Aorta (tissue), 5 donors: ENCODE measurements at regions of chr10 and their contacts with region 1.

Region 1: GRCh38 chr10:28381903-28382347 is 79.1 kb upstream of the MPP7 start:
- DNase-seq: peak; percentile 86 to 88
- ATAC-seq: peak; percentile 94
- H3K4me3 ChIP-seq: no peak overlapping the region
- H3K27ac ChIP-seq: no peak overlapping the region
- H3K4me1 ChIP-seq: no peaks in the 10 kb centered on the region
- H3K27me3 ChIP-seq: no peaks in the 10 kb centered on the region

Region 2: GRCh38 chr10:27558612-27559020 is 823.3 kb before region 1 on chr10:
- intact Hi-C with region 1: loop called in 1 of 2 experiments (anchors 10 kb)
- DNase-seq: peak in 1 of 2 donors; percentile 55
- ATAC-seq: no peak
- H3K4me3 ChIP-seq: no peak overlapping the region
- H3K27ac ChIP-seq: no peak overlapping the region
- H3K4me1 ChIP-seq: no peaks in the 10 kb centered on the region
- H3K27me3 ChIP-seq: no peaks in the 10 kb centered on the region

Region 3: GRCh38 chr10:27742195-27743011 is 639.5 kb before region 1 on chr10:
- intact Hi-C with region 1: loop called in 1 of 2 experiments (anchors 10 kb)
- DNase-seq: peak; percentile 86 to 94
- ATAC-seq: peak; percentile 90
- H3K4me3 ChIP-seq: peak overlapping the region; percentile 78 to 81
- H3K27ac ChIP-seq: peak overlapping the region; percentile 87 to 94
- H3K4me1 ChIP-seq: no peaks in the 10 kb centered on the region
- H3K27me3 ChIP-seq: no peaks in the 10 kb centered on the region

Region 4: DNA sequence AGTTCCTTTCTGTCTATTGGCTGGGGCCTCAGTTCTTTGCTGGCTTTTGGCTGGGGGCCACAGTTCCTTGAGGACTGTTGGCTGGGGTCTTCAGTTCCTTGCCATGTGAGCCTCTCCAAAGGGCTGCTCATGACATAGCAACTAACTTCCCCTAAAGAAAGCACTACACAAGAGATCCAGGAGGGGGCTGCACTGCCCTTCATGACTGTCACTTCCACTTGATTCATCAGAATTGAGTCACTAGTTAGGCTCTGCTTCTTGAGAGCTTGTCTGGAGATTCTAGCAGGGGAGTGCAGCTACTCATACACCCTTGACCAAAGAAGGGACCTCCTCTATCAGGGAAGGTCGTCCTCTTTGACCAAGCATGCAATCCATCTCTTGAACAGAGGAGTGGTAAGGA is 598.3 kb before region 1 on chr10:
- intact Hi-C with region 1: loop called in 1 of 2 experiments (anchors 10 kb)
- DNase-seq: no peak
- ATAC-seq: peak; percentile 15
- H3K4me3 ChIP-seq: no peak overlapping the region
- H3K27ac ChIP-seq: no peak overlapping the region
- H3K4me1 ChIP-seq: peaks cover 3% of the 10 kb centered on the region in 2 donors
- H3K27me3 ChIP-seq: no peaks in the 10 kb centered on the region

Region 5: DNA sequence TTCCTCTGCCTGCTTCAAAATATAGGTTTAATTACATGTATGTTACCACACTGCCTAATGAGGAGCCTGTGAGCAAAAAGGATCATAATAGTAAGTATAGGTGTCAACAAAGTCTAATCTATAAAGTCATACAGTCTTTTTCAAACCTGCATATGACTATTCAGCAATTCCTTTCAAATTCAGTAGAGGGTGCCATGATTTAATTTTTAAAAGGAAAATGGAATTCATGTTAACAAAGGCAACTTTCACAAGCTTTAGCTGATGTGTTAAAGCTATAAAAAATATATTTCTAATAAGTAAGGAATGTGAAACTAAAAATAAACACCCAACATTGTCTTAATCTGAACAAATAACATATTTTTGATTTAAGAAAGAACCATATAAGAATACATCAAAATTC is 131.1 kb before region 1 on chr10:
- intact Hi-C with region 1: loop called (anchors 1 to 2 kb)
- DNase-seq: no peak
- ATAC-seq: peak; percentile 63
- H3K4me3 ChIP-seq: no peak overlapping the region
- H3K27ac ChIP-seq: peak overlapping the region in 1 of 2 donors; percentile 7
- H3K4me1 ChIP-seq: peaks cover 2 to 8% of the 10 kb centered on the region in 2 donors
- H3K27me3 ChIP-seq: no peaks in the 10 kb centered on the region

Region 6: DNA sequence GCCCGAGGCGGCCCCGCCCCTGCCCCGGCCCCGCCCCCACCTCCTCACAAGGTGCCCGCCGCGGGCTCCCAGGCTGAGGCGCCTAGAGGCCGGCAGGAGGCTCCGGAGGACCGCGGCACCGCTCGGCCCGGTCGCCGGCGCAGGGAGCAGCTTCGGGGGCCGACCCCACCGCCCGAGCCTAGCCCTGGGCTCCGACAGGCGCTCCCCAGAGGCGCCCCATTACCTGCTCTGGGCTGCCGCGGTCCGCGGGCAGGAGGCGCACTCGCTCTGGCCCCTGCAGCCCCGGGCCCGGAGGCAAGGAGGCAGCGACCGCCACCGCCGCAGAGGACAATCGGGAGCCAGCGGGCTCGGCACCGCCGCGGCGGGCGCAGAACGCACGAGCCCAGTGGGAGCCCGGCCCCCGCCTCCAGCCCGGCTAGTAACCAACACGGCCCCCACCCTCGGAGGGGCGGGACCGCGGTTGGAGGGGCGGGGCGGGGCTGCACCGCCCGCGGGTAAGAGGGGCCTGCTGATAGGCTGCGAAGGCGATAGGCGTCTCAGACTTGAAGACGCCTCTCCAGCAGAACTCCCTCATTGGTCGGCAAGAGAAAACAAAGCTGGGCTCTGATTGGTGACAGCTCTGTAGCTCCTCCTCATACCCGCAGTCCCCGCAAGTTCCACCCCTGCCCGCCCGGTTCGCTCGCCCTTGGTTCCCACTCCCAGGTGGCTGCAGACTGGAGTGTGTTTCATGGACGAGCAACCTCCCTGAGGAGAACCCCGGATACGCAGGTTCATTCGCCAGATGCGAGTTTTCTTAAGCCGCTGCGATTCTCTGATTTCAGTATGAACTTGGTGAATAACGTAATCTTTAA is 79.1 kb before region 1 on chr10 and contains the start of gene MPP7:
- intact Hi-C with region 1: loop called (anchors 2 to 5 kb)
- DNase-seq: peak; percentile 96 to 97
- ATAC-seq: peak; percentile 100
- H3K4me3 ChIP-seq: peak within 1 kb of the TSS; percentile 79 to 89
- H3K27ac ChIP-seq: peak within 1 kb of the TSS; percentile 91 to 95
- H3K4me1 ChIP-seq: peaks cover 0 to 3% of the 10 kb centered on the region in 2 donors
- H3K27me3 ChIP-seq: no peaks in the 10 kb centered on the region
- total RNA-seq, gene MPP7: 38.0 to 95.3 TPM

Region 7: DNA sequence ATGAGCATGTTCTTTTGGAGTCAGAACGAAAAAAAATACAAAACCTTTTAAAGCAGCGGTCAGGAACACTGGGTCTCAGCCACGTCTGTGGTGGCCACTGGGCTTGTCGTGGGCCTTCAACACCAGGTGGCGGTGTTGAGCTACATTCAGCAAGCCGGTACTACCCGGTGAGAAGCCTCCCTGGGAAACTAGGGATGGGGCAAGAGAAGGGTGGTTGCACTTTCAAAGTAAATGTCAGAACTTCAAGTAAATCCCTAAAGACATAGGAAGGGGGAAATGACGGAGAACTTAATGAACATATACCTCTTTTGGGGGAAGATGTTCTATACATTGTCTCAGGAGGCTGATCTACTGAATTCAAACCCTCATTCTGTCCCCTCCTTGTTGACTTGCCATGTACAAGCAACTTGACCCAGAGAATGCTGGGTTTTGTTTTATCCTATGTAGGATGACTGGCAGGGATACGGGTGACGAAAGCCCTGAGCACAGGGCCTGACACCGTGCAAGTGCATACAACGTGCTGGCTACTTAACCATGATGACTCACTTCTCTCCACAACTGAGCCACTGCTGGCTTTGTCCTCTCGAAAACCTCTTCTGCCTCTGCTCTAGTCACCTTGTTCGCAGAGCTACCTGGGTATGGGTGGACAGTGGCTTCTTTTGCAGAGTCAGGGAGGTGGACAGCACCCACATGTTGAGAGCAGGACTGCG is 246.4 kb after region 1 on chr10:
- intact Hi-C with region 1: no loop called
- DNase-seq: peak; percentile 88 to 94
- ATAC-seq: peak; percentile 89
- H3K4me3 ChIP-seq: no peak overlapping the region
- H3K27ac ChIP-seq: no peak overlapping the region
- H3K4me1 ChIP-seq: no peaks in the 10 kb centered on the region
- H3K27me3 ChIP-seq: no peaks in the 10 kb centered on the region